ENCODE measurements at regions of chr20 and their contacts with region 1.

Region 1: DNA sequence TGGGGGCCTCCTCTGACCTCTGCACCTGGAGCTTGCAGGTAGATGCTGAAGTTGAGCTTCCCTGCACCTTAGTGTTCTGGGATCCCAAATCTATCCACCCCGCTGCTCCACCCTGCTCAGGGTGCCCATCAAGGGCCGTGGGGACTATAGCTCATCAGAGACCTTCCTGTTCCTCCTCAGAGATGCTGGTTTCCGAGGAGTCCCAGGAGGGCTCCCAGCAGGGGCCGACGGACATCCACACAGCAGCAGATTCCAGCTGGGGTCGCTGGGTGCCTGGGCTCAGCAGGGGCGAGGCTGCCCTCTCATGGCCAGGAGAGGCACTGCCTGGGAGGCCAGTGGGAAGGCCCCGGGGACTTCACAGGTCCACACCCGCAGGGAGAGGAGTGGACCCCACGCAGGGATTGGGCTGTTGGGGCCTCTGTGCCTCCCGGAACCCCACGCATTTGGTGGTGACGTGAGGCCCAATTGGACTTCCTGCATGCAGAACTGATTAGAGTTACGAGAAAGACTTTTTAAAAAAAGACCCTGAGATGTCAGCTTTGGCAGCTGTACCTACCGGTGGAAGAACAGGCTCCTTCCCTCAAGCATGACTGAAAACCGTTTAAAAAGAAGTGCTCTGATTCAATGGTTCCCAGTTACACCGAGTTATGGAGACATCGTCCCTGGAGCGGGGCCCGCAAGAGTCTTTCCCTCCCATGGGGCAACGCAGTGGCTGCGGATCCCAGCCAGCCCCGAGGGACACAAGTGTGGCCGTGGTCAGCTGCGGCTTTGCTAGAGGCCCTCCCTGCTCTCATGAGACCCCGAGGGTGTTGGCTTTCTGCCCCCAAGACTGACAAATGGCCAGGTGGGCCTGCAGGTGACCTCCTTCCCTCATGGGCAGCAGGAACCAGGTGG is 25.3 kb upstream of the SLCO4A1 start:
- DNase-seq: peak; percentile 75 to 88
- ATAC-seq: peak; percentile 89 to 95 (median 90)
- H3K4me3 ChIP-seq: no peak overlapping the region
- H3K27ac ChIP-seq: peak overlapping the region; percentile 58
- H3K4me1 ChIP-seq: peaks cover 4% of the 10 kb centered on the region
- H3K27me3 ChIP-seq: peaks cover 0 to 11% (median 5%) of the 10 kb centered on the region in 3 donors
- CTCF ChIP-seq: peak; percentile 91

Region 2: GRCh38 chr20:61253264-61253639 is 1363.7 kb before region 1 on chr20:
- intact Hi-C with region 1: no loop called
- DNase-seq: no peak
- ATAC-seq: peak; percentile 51 to 70 (median 56)
- H3K4me3 ChIP-seq: peak overlapping the region; percentile 64
- H3K27ac ChIP-seq: no peak overlapping the region
- H3K4me1 ChIP-seq: no peaks in the 10 kb centered on the region
- H3K27me3 ChIP-seq: peaks cover 0 to 30% (median 4%) of the 10 kb centered on the region in 3 donors
- CTCF ChIP-seq: no peak

Region 3: GRCh38 chr20:62407221-62407992 is 209.6 kb before region 1 on chr20 and contains the start of gene CABLES2:
- intact Hi-C with region 1: loop called (anchors 5 to 10 kb)
- DNase-seq: peak; percentile 96 to 98
- ATAC-seq: peak; percentile 92 to 95 (median 94)
- H3K4me3 ChIP-seq: peak within 1 kb of the TSS; percentile 74
- H3K27ac ChIP-seq: peak within 1 kb of the TSS; percentile 9
- H3K4me1 ChIP-seq: peaks cover 26% of the 10 kb centered on the region
- H3K27me3 ChIP-seq: no peaks in the 10 kb centered on the region
- CTCF ChIP-seq: peak; percentile 21
- total RNA-seq, gene CABLES2: 3.0 to 4.2 (median 3.9) TPM

Region 4: GRCh38 chr20:62454904-62455636 is 161.9 kb before region 1 on chr20:
- intact Hi-C with region 1: no loop called
- DNase-seq: no peak
- ATAC-seq: no peak
- H3K4me3 ChIP-seq: no peak overlapping the region
- H3K27ac ChIP-seq: no peak overlapping the region
- H3K4me1 ChIP-seq: no peaks in the 10 kb centered on the region
- H3K27me3 ChIP-seq: peaks cover 0 to 46% (median 8%) of the 10 kb centered on the region in 3 donors
- CTCF ChIP-seq: no peak

Region 5: DNA sequence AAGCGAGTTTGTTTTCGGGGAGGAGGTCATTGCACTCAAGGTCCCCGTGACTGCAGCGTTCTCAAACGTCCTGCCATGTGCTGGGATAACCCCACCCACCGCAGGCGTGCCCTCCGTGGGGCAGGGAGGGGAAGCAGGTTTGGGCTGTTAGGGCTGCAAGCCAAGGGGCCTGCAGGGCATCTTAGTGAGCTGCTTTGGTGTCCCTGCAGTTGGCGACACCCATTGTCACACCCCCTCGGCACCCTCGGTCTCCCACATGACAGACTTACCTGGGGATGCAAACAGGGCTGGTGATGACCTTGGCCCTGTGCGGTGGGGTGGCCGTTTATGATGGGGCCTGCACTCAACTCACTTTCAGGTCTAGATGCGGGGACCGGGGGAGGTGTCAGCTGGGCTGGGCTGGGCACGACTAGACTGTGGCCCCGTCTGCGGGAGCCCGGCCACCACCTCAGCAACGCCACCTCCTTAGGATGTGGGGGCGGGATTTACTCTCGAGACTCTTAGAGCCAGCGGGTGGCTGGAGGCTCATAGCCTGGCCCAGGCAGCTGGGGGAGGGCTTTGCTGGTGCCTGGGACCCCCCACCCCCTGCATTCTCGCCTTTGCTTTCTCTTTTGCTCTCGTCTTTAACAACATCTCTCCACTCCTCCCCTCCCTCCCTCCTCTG is 134.7 kb before region 1 on chr20:
- intact Hi-C with region 1: loop called in 1 of 2 experiments (anchors 5 kb)
- DNase-seq: no peak
- ATAC-seq: no peak
- H3K4me3 ChIP-seq: no peak overlapping the region
- H3K27ac ChIP-seq: no peak overlapping the region
- H3K4me1 ChIP-seq: peaks cover 8% of the 10 kb centered on the region
- H3K27me3 ChIP-seq: peaks cover 0 to 74% (median 12%) of the 10 kb centered on the region in 3 donors
- CTCF ChIP-seq: no peak

Region 6: GRCh38 chr20:63452821-63453523 is 836.0 kb after region 1 on chr20:
- intact Hi-C with region 1: no loop called
- DNase-seq: peak in 1 of 2 donors; percentile 46
- ATAC-seq: peak; percentile 52 to 80 (median 64)
- H3K4me3 ChIP-seq: no peak overlapping the region
- H3K27ac ChIP-seq: no peak overlapping the region
- H3K4me1 ChIP-seq: no peaks in the 10 kb centered on the region
- H3K27me3 ChIP-seq: peaks cover 0 to 84% (median 29%) of the 10 kb centered on the region in 3 donors
- CTCF ChIP-seq: peak; percentile 16